ENCODE measurements at regions of chr1 and their contacts with region 1.

Region 1: DNA sequence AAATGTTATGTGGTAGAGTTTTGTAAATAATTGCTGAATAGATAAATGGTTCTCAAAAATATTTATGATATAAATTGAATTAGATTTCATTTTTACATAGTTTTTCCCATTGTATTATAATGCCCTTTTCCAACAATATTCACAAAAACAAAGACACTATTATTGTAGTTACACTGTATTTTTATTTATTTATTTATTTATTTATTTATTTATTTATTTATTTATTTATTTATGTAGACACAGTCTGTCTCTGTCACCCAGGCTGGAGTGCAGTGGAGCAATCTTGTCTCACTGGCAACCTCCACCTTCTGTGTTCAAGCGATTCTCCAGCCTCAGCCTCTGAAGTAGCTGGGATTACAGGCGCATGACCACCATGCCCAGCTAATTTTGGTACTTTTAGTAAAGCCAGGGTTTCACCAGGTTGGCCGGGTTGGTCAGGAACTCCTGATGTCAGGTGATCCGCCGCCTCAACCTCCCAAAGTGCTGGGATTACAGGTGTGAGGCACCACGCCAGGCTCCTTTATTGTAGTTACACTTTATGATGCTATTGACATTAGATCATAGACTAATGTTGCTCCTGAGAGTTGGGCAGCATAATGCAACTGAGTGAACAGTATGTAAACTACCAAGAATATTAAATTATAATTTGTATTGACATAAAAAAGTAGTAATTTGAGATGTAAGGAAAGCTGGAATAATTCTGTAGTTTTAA is 1430.0 kb upstream of the PRMT6 start:
- DNase-seq: no peak
- ATAC-seq: no peak
- H3K4me3 ChIP-seq: no peak overlapping the region
- H3K27ac ChIP-seq: no peak overlapping the region
- H3K4me1 ChIP-seq: no peaks in the 10 kb centered on the region
- H3K27me3 ChIP-seq: no peaks in the 10 kb centered on the region
- CTCF ChIP-seq: no peak
- POLR2A ChIP-seq: no peak
- RAD21 ChIP-seq: no peak

Region 2: DNA sequence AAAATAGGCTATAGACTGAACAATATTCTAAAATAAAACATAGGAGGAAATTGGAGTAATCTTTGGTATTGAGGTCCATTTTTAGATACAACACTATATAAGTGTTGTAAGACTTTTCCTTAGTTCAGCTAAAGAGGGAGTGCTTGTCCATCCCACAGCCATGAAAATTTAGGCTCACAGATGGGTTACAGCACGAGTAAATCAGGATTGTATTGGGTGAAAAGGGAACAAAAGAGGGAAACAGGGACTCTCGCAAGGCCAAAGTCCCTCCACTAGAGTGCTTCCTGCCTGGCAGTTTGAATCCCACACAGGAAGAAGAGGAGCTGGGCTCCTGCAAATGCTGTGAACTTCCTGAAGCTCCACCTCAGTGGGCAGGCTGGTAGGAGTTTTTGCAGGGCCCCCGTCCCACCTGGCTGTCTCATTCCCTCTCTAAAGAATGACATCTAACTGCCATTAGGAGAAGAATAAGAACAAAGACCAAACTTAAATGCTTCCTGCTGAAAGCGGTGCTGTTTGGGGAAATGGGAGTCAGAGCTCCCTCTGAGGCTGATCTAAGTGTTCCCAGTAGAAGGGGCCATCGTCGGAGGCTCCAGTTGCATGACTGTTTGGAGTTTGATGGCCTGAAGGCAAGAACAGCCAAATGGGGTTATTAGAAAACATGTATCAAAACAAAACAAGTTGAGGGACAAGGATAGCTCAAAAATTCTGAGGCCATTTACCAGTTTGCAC is 718.1 kb after region 1 on chr1:
- CTCF ChIA-PET with region 1: no interaction called
- POLR2A ChIA-PET with region 1: no interaction called
- dilution Hi-C with region 1: no loop called
- in situ Hi-C with region 1: no loop called
- intact Hi-C with region 1: loop called (anchors 5 kb)
- DNase-seq: no peak
- ATAC-seq: no peak
- H3K4me3 ChIP-seq: no peak overlapping the region
- H3K27ac ChIP-seq: no peak overlapping the region
- H3K4me1 ChIP-seq: no peaks in the 10 kb centered on the region
- H3K27me3 ChIP-seq: no peaks in the 10 kb centered on the region
- CTCF ChIP-seq: no peak
- POLR2A ChIP-seq: no peak
- RAD21 ChIP-seq: no peak